AG04449 (cell line): ENCODE measurements at regions of chr17 and their contacts with region 1.

Region 1: GRCh38 chr17:81018044-81018802 is 16.7 kb upstream of the BAIAP2 start:
- DNase-seq: no peak
- H3K4me3 ChIP-seq: peak overlapping the region; percentile 19
- CTCF ChIP-seq: no peak

Region 2: DNA sequence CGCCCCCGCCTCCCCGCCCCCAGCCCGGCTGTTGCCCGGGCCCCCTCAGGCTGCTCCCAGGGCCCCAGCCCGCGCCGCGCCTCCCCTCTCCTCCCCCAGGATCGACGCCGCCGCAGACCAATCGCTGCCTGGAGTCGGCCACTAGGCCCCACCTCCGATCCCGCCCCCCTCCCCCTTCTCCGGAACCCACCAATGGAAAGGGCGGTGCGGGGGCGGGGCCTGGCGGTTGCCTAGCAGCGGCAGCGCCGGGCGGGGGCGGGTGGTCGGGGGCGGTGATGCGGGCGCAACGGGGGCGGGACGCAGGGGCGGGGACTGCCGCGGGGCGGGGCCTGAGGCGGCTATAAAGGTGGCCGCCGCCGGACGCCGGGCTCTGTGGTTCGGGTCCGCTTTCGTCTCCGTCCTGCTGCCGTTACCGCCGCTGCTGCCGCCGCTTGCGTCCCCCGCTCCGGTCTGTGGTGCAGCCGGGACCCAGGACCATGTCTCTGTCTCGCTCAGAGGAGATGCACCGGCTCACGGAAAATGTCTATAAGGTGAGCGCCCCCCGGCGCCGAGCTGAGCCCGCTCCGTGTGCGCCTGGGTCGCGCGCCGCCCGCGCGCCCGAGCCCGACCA is 16.7 kb after region 1 on chr17 and contains the start of gene BAIAP2:
- CTCF ChIA-PET with region 1: interaction called, 28 read pairs
- POLR2A ChIA-PET with region 1: no interaction called
- DNase-seq: no peak
- H3K4me3 ChIP-seq: peak within 1 kb of the TSS; percentile 78
- CTCF ChIP-seq: no peak

Region 3: DNA sequence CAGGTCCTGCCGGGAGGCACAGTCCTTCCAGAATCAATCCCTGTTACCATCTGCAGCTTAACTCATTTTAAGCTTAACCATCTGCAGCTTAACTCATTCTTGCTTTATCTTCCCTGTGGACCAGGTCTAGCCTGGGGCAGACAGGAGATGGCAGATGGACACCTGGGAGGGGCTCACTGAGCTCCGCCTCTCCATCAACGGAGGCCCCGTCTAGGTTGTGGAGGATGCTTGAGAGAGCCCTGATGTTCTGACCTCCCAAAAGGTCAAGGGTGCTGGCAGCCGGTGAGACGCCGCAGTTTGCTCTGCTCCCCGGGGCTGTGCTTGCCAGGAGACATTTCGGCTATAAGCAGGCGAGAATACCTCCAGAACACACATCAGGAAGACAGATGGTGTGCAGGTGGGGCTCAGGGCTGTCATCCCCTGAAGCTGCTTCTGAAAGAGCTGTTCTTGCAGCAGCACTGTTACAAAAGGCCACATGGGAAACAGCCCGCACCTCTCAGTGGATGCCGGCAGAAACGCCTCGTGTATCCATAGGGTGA is 58.0 kb after region 1 on chr17:
- CTCF ChIA-PET with region 1: interaction called, 10 read pairs
- POLR2A ChIA-PET with region 1: no interaction called
- DNase-seq: no peak
- H3K4me3 ChIP-seq: no peak overlapping the region
- CTCF ChIP-seq: no peak